Heart right ventricle (tissue), 16 donors: ENCODE measurements at regions of chr7 and their contacts with region 1.

Region 1: DNA sequence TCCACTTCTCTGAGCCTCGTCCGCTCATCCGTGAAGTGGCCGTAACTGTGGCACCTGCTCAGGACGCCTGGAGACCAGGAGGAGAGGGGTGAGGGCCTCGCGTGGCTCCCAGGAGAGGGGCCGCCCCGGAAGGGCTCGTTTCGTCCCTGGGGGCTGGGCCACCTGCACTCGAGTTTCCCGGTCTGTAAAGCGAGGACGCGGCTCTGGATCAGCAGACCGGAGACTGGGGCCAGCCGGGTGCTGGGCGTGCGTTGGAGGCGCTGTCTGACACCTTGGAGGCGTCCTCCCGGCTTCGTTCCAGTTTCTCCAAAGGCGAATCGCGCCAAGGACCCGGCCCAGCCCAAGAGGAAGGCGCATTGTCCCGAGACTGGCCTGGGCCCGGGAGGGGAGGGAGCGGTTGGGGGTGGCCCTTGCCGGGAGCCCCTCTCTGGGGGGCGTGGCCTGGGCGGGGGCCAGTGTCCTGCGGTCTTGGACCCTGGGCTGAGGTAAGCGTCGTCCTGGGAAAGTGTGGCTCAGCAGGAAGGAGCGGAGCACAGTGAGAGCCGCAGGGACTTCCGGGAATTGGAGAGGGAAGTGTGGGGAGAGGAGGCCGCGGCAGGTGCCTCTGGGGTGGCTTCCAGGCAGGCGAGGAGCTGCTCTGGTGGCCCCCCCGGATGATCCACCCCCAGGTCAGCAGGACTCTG is 89.6 kb downstream of the FOXL3 start:
- DNase-seq: no peak
- ATAC-seq: peak; percentile 18 to 68 (median 38)
- H3K4me3 ChIP-seq: peak overlapping the region in 9 of 10 donors; percentile 18 to 52 (median 35)
- H3K27ac ChIP-seq: no peak overlapping the region
- H3K4me1 ChIP-seq: peaks cover 0 to 24% (median 13%) of the 10 kb centered on the region in 9 donors
- H3K27me3 ChIP-seq: peaks cover 0 to 53% (median 41%) of the 10 kb centered on the region in 7 donors
- CTCF ChIP-seq: no peak

Region 2: DNA sequence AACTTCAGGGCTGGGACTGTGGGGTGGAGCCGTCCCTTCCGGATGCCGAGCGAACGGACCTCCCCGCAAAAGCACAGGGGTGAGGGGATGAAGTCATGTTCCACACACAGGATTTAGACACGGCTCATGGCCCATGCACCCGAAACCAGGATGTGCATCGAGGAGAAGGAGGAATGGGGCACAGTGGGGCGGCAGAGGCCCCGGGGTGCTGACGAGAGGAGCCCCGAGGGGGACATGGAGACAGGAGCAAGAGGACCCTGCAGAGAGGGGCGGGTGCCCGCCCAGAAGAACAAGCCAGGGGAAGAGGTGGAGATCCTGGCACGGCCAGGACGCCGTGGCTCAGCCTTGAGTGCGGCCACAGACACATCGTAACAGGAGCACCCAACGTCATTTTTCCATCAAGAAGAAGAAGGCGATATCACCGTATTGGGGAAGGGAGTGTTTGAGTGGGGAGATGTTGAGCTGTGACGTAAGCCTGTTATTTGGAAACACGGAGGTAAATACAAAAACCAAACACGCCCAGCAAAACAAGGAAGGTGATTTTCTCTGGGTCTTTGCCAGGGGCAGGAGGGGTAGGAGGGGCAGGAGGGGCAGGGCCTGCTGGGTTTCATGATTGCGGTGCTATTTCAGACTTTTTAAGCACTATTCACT is 114.9 kb before region 1 on chr7:
- intact Hi-C with region 1: no loop called
- DNase-seq: no peak
- ATAC-seq: peak in 4 of 8 donors; percentile 21 to 38 (median 25)
- H3K4me3 ChIP-seq: no peak overlapping the region
- H3K27ac ChIP-seq: no peak overlapping the region
- H3K4me1 ChIP-seq: no peaks in the 10 kb centered on the region
- H3K27me3 ChIP-seq: no peaks in the 10 kb centered on the region
- CTCF ChIP-seq: no peak

Region 3: DNA sequence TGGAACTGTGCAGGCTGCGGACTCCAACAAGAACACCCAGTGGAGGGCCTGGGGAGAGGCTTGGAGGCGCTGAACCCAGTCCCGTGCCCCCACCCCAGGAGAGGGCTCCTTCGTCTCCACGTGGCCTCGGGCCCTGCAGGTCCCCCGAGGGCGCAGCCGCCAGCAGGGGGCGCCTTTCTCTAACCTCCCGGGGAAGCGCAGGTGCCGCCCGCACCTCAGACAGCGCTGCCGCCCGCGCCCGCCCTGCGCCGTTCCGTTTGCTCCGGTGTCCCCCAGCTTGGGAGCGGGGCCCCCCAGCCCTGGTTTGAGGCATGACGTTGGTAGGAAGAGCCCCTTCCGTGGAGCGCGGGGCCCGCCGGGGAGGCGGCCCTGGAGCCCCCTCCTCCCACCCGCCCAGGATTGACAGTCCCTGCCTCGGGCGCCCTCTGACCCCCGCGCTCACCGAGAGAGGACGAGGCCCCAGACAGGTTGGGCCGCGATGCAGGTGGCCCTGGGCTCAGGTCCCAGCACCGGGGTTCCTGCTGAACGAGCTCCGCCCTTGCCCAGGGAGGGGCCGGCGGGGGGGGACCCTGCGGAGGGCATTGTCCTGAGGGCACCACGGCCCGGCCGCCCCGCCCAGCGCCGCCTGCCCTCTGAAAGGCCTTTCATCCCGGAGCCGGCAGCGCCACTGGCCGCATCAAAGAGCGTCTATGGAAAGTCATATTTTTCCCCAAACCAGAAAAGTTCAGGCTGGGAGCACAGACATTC is 46.8 kb before region 1 on chr7:
- intact Hi-C with region 1: no loop called
- DNase-seq: peak; percentile 75 to 86
- ATAC-seq: peak; percentile 86 to 94 (median 90)
- H3K4me3 ChIP-seq: peak overlapping the region in 9 of 10 donors; percentile 37 to 56 (median 50)
- H3K27ac ChIP-seq: peak overlapping the region; percentile 24 to 85 (median 76)
- H3K4me1 ChIP-seq: peaks cover 4 to 17% (median 12%) of the 10 kb centered on the region in 9 donors
- H3K27me3 ChIP-seq: peaks cover 0 to 15% (median 4%) of the 10 kb centered on the region in 7 donors
- CTCF ChIP-seq: peak; percentile 78 to 95 (median 91)

Region 4: GRCh38 chr7:435630-436366 is 56.2 kb after region 1 on chr7:
- intact Hi-C with region 1: no loop called
- DNase-seq: peak in 1 of 2 donors; percentile 44
- ATAC-seq: peak in 3 of 8 donors; percentile 31 to 52 (median 34)
- H3K4me3 ChIP-seq: peak overlapping the region in 5 of 10 donors; percentile 26 to 46 (median 31)
- H3K27ac ChIP-seq: no peak overlapping the region
- H3K4me1 ChIP-seq: peaks cover 0 to 5% (median 0%) of the 10 kb centered on the region in 9 donors
- H3K27me3 ChIP-seq: peaks cover 0 to 30% (median 11%) of the 10 kb centered on the region in 7 donors
- CTCF ChIP-seq: no peak

Region 5: DNA sequence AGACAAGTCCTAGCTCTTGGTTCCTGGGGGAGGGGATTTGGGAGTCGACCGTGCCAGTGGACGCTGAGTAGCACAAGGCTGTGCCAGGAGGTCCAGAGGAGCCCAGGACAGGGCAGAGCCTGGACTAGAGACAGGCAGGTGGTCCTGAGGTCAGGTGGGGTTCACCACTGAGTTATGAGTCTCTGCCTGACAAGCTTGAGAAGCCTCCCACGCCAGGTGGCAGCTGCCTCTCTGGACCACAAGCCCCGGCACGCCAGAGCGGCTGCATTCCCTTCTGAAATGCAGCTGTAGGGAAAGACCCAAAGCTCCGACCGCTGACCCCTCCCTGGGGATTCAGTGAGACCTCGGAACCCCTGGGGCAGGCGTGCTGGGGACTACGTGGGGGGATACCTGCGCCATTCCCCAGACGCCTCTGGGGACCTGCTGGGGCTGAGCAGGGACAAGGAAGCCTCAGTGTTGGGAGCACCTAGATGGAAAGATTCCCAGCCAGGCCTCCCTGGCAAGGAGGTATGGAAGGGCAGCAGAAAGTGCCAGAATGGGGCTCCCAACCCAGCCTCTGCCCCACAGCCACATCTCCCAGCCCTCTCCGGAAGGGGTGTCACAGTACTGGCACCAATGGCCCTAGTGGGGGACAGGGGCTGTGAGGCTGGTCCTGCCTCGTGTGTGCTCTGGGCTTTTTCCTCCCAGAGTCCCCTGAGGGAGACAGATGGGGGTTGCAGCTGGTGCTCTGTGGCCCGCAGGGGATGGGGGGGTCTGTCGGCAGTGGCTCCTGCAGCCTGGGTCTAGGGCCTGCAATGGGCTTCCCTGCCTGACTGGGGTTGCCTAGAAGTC is 111.1 kb after region 1 on chr7:
- intact Hi-C with region 1: loop called in 1 of 10 experiments (anchors 10 kb)
- DNase-seq: peak in 1 of 2 donors; percentile 7
- ATAC-seq: no peak
- H3K4me3 ChIP-seq: no peak overlapping the region
- H3K27ac ChIP-seq: no peak overlapping the region
- H3K4me1 ChIP-seq: peaks cover 0 to 19% (median 0%) of the 10 kb centered on the region in 9 donors
- H3K27me3 ChIP-seq: peaks cover 0 to 5% (median 0%) of the 10 kb centered on the region in 7 donors
- CTCF ChIP-seq: no peak